ENCODE measurements at regions of chr3 and their contacts with region 1.

Region 1: GRCh38 chr3:47824541-47825473 is 21.9 kb downstream of the DHX30 start:
- DNase-seq: no peak
- ATAC-seq: peak; percentile 100
- H3K4me3 ChIP-seq: peak overlapping the region; percentile 87 to 97
- H3K27ac ChIP-seq: peak overlapping the region; percentile 89
- H3K4me1 ChIP-seq: peaks cover 10% of the 10 kb centered on the region
- H3K27me3 ChIP-seq: no peaks in the 10 kb centered on the region
- CTCF ChIP-seq: peak; percentile 94

Region 2: GRCh38 chr3:46089237-46090011 is 1735.4 kb before region 1 on chr3:
- CTCF ChIA-PET with region 1: no interaction called
- POLR2A ChIA-PET with region 1: no interaction called
- in situ Hi-C with region 1: no loop called
- intact Hi-C with region 1: no loop called
- DNase-seq: no peak
- ATAC-seq: no peak
- H3K4me3 ChIP-seq: no peak overlapping the region
- H3K27ac ChIP-seq: no peak overlapping the region
- H3K4me1 ChIP-seq: no peaks in the 10 kb centered on the region
- H3K27me3 ChIP-seq: no peaks in the 10 kb centered on the region
- CTCF ChIP-seq: no peak

Region 3: DNA sequence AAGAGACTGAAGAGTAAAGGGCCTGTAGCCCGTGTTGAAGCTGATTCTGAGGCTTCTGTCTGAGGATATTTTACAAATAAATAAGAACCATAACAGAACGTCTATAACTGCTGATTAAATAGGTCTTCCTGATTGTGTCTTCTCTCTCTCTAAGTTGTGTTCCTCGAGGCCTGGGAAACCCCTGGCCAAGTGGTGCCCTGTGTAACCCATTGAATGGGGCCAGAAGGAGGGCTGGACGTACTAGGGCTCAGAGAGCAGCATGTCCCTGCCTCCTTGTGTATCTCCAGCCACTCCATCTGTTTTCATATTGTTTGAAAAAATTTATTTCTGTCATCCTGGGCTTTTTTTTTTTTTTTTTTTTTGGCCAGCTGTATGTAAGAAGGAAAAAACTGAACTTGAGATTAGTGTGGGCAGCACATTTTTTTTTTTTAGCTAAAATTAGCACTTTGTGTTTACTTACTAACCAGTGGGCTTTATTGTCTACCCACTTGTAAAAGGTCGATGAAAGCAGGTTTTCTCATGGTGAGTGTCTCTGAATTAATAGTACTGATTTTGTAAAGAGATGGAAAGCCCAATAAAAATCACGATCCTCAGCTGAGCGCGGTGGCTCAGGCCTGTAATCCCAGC is 11.1 kb before region 1 on chr3:
- CTCF ChIA-PET with region 1: interaction called, 5 read pairs
- POLR2A ChIA-PET with region 1: interaction called, 11 read pairs
- in situ Hi-C with region 1: no loop called
- intact Hi-C with region 1: no loop called
- DNase-seq: no peak
- ATAC-seq: no peak
- H3K4me3 ChIP-seq: no peak overlapping the region
- H3K27ac ChIP-seq: no peak overlapping the region
- H3K4me1 ChIP-seq: no peaks in the 10 kb centered on the region
- H3K27me3 ChIP-seq: no peaks in the 10 kb centered on the region
- CTCF ChIP-seq: no peak

Region 4: DNA sequence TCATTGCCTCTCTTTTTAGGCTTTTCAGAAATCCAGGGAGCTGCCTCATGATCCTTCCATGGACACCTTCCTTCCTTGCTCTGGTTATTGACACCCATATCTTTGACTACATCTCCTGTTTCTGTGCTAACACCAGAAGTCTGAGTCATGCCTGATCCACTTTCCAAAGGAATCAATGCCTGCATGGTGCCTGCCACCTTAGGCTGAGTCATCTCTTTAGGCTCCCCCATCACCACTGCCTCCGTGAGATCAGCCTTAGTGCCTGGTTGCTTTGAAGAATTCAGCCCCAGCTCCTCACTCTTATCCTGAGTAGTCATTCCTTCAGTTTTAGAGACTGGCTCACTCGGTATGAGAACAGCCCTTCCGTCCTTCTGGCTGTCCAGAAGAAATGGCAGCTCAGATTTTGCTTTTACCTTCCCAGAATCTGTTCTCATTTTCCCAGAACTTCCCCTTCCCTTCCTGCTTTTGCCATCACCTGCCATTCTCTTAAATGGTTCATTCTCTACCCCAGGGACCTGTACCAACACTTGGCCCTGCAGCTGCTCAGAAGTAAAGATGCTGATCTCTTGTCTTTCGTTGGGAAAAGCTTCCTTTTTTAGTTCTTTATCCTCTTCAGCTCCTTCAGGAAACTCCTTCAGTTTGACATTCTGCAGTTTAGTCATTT is 86.1 kb after region 1 on chr3:
- CTCF ChIA-PET with region 1: no interaction called
- POLR2A ChIA-PET with region 1: interaction called, 10 read pairs
- in situ Hi-C with region 1: no loop called
- intact Hi-C with region 1: no loop called
- DNase-seq: peak; percentile 7
- ATAC-seq: peak; percentile 88
- H3K4me3 ChIP-seq: no peak overlapping the region
- H3K27ac ChIP-seq: no peak overlapping the region
- H3K4me1 ChIP-seq: no peaks in the 10 kb centered on the region
- H3K27me3 ChIP-seq: no peaks in the 10 kb centered on the region
- CTCF ChIP-seq: no peak

Measured in Panc1 (cell line).